ENCODE measurements at regions of chr11 and their contacts with region 1.

Region 1: GRCh38 chr11:73876424-73877300 is at the starts of genes COA4 and PAAF1:
- DNase-seq: peak; percentile 92 to 95
- ATAC-seq: peak; percentile 98 to 100 (median 100)
- H3K4me3 ChIP-seq: peak within 1 kb of the TSS; percentile 42 to 88 (median 74)
- H3K27ac ChIP-seq: peak within 1 kb of the TSS in 9 of 10 donors; percentile 52 to 90 (median 85)
- H3K4me1 ChIP-seq: peaks cover 0 to 27% (median 23%) of the 10 kb centered on the region in 9 donors
- H3K27me3 ChIP-seq: no peaks in the 10 kb centered on the region
- CTCF ChIP-seq: no peak
- total RNA-seq, gene COA4: 42.3 to 63.2 (median 50.9) TPM
- total RNA-seq, gene PAAF1: 7.7 to 14.3 (median 12.7) TPM

Region 2: GRCh38 chr11:72511393-72512047 is 1365.1 kb before region 1 on chr11:
- intact Hi-C with region 1: no loop called
- DNase-seq: no peak
- ATAC-seq: no peak
- H3K4me3 ChIP-seq: no peak overlapping the region
- H3K27ac ChIP-seq: no peak overlapping the region
- H3K4me1 ChIP-seq: no peaks in the 10 kb centered on the region
- H3K27me3 ChIP-seq: no peaks in the 10 kb centered on the region
- CTCF ChIP-seq: no peak

Region 3: DNA sequence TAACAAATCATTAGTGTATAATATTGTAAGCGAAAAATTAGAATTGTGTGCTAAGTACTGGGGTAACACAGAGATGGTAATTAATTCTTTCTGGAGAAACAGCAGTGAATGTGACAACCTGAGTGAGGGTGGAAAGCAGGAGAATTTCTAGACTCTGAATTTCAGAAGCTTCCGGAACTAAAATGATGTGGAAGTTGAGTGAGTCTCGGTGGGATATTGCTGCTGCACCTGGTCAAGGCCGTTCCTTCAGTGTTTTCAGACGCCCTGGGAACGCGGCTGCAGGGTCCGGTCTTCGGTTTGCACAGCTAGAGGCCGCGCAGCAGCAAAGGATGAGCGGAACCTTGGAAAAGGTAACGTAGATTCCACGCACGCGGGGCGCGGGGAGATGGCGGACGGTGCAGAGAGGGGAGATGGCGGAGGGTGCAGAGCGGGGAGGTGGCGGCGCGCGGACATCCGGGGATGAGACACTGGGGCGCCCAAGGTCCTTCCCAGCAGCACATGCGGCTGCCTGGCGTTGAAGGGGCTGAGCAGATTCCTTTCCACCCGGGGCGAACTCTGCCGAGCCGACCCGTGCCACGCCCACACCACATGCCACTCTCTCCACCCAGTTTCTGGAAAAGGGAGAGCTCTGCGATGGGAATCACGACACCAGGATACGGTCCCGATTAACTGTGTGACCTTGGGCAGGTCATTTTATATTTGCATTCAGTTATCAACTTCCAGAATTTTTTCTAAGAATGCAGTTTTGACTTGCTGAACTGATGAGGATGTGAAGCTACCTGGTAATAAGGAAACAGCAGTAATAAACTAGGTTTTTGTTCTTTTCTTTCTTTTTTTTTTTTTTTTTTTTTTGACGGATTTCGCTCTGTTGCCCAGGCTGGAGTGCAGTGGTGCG is 88.8 kb before region 1 on chr11 and contains the start of gene MRPL48:
- intact Hi-C with region 1: loop called in 4 of 10 experiments (anchors 5 to 10 kb)
- DNase-seq: peak; percentile 91 to 93
- ATAC-seq: peak; percentile 99 to 100 (median 99)
- H3K4me3 ChIP-seq: peak within 1 kb of the TSS; percentile 53 to 80 (median 70)
- H3K27ac ChIP-seq: peak within 1 kb of the TSS; percentile 78 to 97 (median 90)
- H3K4me1 ChIP-seq: peaks cover 0 to 23% (median 15%) of the 10 kb centered on the region in 9 donors
- H3K27me3 ChIP-seq: no peaks in the 10 kb centered on the region
- CTCF ChIP-seq: no peak
- total RNA-seq, gene MRPL48: 25.1 to 44.4 (median 32.6) TPM

Region 4: GRCh38 chr11:74011360-74012073 is 134.9 kb after region 1 on chr11:
- intact Hi-C with region 1: no loop called
- DNase-seq: no peak
- ATAC-seq: peak in 3 of 8 donors; percentile 14 to 57 (median 36)
- H3K4me3 ChIP-seq: no peak overlapping the region
- H3K27ac ChIP-seq: peak overlapping the region in 2 of 10 donors; percentile 27 to 35
- H3K4me1 ChIP-seq: peaks cover 0 to 60% (median 26%) of the 10 kb centered on the region in 9 donors
- H3K27me3 ChIP-seq: no peaks in the 10 kb centered on the region
- CTCF ChIP-seq: no peak

Measured in heart right ventricle (tissue), 16 donors.